ENCODE measurements at regions of chr11 and their contacts with region 1.

Region 1: DNA sequence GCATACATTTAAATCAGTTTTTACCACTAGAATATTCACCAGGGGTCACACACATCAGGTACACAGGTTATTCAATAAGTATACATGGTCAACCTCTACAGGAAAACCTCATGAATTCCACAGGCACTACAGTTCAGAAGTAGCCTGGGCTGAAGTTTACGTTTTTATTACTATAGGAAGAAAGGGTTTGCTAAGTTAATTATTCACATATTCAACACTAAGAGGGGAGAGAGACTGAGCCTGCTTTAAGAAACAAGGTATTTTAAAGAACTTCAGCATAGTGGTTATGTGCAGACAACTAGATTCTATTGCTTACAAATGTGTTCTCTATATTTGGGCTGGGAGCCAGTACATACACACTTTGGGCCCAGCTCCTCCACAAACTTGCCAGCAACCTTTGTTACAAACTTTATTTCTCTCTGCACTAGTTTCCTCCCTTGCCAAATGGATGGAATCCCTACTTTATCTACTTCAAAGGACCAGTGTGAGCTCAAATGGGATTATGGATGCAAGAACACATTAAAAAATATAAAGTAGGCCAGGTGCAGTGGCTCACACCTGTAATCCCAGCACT is 31.9 kb downstream of the IL18BP start:
- DNase-seq: no peak
- ATAC-seq: no peak
- H3K4me3 ChIP-seq: no peak overlapping the region
- H3K27ac ChIP-seq: no peak overlapping the region
- H3K4me1 ChIP-seq: no peaks in the 10 kb centered on the region
- H3K27me3 ChIP-seq: no peaks in the 10 kb centered on the region
- CTCF ChIP-seq: no peak

Region 2: DNA sequence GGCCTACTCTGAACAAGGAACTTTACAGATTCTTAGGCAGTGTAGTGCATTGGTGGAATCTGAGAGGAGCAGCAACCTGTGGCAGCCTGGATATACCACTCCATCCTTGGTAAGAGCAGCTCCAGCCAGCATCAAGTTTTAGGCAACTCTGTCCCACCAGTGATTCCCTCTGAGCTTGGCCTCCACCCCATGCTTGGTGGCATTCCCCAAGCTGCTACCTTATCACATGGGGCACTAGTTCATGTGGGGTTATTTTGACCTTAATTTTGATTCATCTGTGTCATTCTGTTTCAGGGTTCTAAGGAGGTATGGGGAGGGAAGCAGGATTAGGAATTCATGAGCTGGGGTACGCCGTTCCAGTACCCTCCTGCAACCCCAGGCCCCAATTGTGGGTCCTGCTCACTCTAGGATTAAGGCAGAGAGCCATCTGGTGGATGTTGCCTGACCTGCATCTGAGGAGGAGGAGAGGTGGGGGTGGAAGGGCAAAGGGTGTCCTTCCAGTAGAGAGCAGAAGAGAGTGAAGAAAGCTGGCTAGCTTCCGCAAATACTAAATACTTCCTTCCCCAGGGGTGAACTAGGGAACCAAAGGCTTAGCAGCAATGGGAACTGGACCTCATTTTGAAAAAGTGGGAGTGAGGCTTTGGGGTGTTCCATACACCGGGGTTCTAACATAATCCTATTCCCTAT is 60.6 kb after region 1 on chr11:
- CTCF ChIA-PET with region 1: interaction called, 23 read pairs
- POLR2A ChIA-PET with region 1: no interaction called
- intact Hi-C with region 1: loop called (anchors 1 kb)
- DNase-seq: peak; percentile 80
- ATAC-seq: peak; percentile 90
- H3K4me3 ChIP-seq: no peak overlapping the region
- H3K27ac ChIP-seq: no peak overlapping the region
- H3K4me1 ChIP-seq: no peaks in the 10 kb centered on the region
- H3K27me3 ChIP-seq: no peaks in the 10 kb centered on the region
- CTCF ChIP-seq: peak; percentile 93

Region 3: GRCh38 chr11:72141066-72141465 is 110.5 kb after region 1 on chr11:
- CTCF ChIA-PET with region 1: interaction called, 10 read pairs
- POLR2A ChIA-PET with region 1: no interaction called
- intact Hi-C with region 1: loop called (anchors 1 kb)
- DNase-seq: peak; percentile 78
- ATAC-seq: no peak; the same call in 1 of the 2 replicates
- H3K4me3 ChIP-seq: no peak overlapping the region
- H3K27ac ChIP-seq: no peak overlapping the region
- H3K4me1 ChIP-seq: peaks cover 18% of the 10 kb centered on the region; the same call in 1 of the 2 replicates
- H3K27me3 ChIP-seq: no peaks in the 10 kb centered on the region
- CTCF ChIP-seq: no peak

Region 4: GRCh38 chr11:72154816-72155215 is 124.3 kb after region 1 on chr11:
- CTCF ChIA-PET with region 1: interaction called, 10 read pairs
- POLR2A ChIA-PET with region 1: no interaction called
- intact Hi-C with region 1: no loop called
- DNase-seq: no peak
- ATAC-seq: no peak
- H3K4me3 ChIP-seq: no peak overlapping the region
- H3K27ac ChIP-seq: no peak overlapping the region
- H3K4me1 ChIP-seq: no peaks in the 10 kb centered on the region
- H3K27me3 ChIP-seq: peaks cover 18% of the 10 kb centered on the region; the same call in 1 of the 2 replicates
- CTCF ChIP-seq: no peak

Region 5: DNA sequence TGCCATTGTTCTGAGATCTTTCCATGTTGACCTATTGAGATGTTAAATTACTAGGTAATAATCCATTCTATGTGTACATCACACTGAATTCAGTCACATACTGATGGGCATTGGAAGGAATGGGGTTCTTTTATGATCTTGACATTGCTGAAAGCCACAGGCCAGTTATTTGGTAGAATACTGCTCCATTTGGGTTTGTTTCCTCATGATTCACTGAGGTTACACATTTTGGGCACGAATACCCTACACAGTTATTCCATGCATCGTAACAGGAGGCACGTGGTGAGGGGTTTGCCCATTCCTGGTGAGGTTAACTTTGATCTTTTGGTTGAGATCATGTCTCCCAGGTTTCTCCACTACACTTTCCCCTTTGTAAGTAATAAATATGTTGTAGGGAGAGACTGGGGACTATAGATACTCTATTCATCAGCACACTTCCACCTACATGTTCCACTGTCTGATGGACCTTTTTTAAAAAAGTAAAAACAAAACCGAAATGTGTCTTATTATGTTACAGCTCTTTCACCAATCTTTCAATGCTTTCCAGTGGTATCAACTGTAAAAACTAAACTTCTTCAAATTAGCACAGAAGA is 149.3 kb after region 1 on chr11:
- CTCF ChIA-PET with region 1: interaction called, 6 read pairs
- POLR2A ChIA-PET with region 1: no interaction called
- intact Hi-C with region 1: loop called (anchors 1 kb)
- DNase-seq: no peak
- ATAC-seq: no peak
- H3K4me3 ChIP-seq: no peak overlapping the region
- H3K27ac ChIP-seq: no peak overlapping the region
- H3K4me1 ChIP-seq: 0 out of 2 replicates have a peak, but pooled peaks cover 4% of the 10 kb centered on the region
- H3K27me3 ChIP-seq: 0 out of 2 replicates have a peak, but pooled peaks cover 3% of the 10 kb centered on the region
- CTCF ChIP-seq: no peak

Region 6: GRCh38 chr11:72293910-72294615 is 263.5 kb after region 1 on chr11:
- CTCF ChIA-PET with region 1: no interaction called
- POLR2A ChIA-PET with region 1: no interaction called
- intact Hi-C with region 1: no loop called
- DNase-seq: no peak
- ATAC-seq: no peak
- H3K4me3 ChIP-seq: no peak overlapping the region
- H3K27ac ChIP-seq: no peak overlapping the region
- H3K4me1 ChIP-seq: no peaks in the 10 kb centered on the region
- H3K27me3 ChIP-seq: no peaks in the 10 kb centered on the region
- CTCF ChIP-seq: no peak